ENCODE measurements at regions of chr16 and their contacts with region 1.

Region 1: DNA sequence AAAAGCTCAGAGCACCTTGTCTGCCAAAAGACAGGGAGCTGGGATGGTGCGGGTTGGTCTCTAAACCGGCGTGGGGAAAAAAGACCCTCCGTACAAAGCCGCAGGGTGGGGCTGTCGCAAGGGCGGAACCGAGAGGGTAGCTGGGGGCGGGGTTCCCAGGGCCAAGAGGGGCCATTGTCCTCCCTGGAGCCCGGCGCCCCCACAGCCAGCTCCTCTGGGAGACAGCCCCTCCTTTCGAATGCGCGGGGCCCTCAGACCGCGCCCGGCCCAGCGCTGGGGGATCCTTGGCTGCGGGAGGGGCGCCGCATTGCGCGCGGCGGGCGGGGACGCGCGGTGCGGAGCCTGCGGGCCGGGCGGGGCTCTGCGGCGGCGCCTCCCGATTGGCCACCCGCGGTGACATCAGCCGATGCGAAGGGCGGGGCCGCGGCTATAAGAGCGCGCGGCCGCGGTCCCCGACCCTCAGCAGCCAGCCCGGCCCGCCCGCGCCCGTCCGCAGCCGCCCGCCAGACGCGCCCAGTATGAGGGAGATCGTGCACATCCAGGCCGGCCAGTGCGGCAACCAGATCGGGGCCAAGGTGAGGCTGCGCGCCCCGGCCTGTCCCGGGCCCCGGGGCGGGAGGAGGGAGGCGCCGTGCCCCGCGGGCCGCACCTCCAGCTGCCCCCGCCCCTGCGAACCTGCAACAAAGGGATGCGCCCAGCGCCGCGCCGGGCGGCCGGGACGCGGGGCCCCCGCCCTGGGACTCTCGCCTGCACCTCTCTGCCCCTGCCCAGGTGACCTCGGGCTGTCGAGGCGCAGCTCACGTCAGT is at the start of gene TUBB3:
- DNase-seq: peak; percentile 90 to 98 (median 92)
- ATAC-seq: peak; percentile 69
- H3K4me3 ChIP-seq: peak within 1 kb of the TSS; percentile 69
- H3K27ac ChIP-seq: peak within 1 kb of the TSS; percentile 92
- H3K4me1 ChIP-seq: peaks cover 30 to 86% of the 10 kb centered on the region in 2 experiments
- H3K27me3 ChIP-seq: no peaks in the 10 kb centered on the region
- CTCF ChIP-seq: peak in 2 of 3 experiments; percentile 10 to 11; a peak in 2 of 6 replicates
- EP300 ChIP-seq: no peak
- POLR2A ChIP-seq: peak; percentile 60; the same call in 1 of the 2 replicates
- RAD21 ChIP-seq: no peak
- polyA plus RNA-seq, gene TUBB3: 0.18 to 0.53 TPM

Region 2: DNA sequence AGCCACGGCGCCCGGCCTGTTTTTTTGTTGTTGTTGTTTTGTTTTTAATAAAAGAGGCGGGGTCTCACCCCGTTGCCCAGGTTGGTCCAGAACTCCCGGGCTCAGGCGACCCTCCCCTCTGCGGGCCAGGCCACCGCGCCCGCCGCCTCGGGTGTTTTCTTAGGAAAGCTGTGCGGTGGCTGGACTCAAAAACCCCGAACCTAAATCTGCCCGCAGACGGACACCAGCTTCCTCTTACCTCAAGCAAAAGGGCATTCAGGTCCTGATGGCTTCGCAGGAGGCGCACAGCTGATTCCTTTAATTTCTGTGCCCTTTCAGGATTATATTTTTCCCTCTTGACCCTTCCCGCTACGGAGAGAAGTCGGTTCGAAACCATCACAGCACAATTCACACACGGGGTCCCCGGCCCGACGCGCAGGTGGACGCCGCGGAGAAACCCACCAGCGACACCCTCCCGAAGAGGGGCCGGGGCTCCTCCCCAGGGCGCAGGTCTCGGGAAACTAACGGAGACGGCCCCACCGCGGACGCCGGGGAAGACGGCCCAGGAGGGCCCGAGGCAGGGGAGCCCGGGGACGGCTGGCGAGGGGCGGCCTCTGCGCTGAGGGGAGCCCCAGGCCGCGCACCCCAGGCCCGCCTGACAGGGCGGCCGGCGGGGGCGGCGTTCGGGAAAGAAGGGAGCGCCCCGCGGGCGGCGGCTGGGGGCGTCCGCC is 107.3 kb before region 1 on chr16:
- CTCF ChIA-PET with region 1: no interaction called
- POLR2A ChIA-PET with region 1: interaction called, 4 read pairs
- in situ Hi-C with region 1: no loop called
- intact Hi-C with region 1: loop called (anchors 5 kb)
- DNase-seq: peak in 2 of 4 experiments; percentile 36 to 47
- ATAC-seq: peak; percentile 3
- H3K4me3 ChIP-seq: peak overlapping the region; percentile 75
- H3K27ac ChIP-seq: peak overlapping the region; percentile 85
- H3K4me1 ChIP-seq: peaks cover 11 to 41% of the 10 kb centered on the region in 2 experiments; a peak in 4 of 5 replicates
- H3K27me3 ChIP-seq: no peaks in the 10 kb centered on the region
- CTCF ChIP-seq: no peak
- EP300 ChIP-seq: no peak
- POLR2A ChIP-seq: no peak
- RAD21 ChIP-seq: no peak

Region 3: GRCh38 chr16:89909777-89910716 is 13.0 kb before region 1 on chr16:
- CTCF ChIA-PET with region 1: no interaction called
- POLR2A ChIA-PET with region 1: interaction called, 19 read pairs
- in situ Hi-C with region 1: no loop called
- intact Hi-C with region 1: no loop called
- DNase-seq: peak; percentile 71 to 82 (median 80)
- ATAC-seq: peak; percentile 98
- H3K4me3 ChIP-seq: no peak overlapping the region
- H3K27ac ChIP-seq: no peak overlapping the region
- H3K4me1 ChIP-seq: peaks cover 0 to 37% of the 10 kb centered on the region in 2 experiments; a peak in 2 of 5 replicates
- H3K27me3 ChIP-seq: no peaks in the 10 kb centered on the region
- CTCF ChIP-seq: peak; percentile 80 to 96 (median 84)
- EP300 ChIP-seq: no peak
- POLR2A ChIP-seq: no peak
- RAD21 ChIP-seq: peak in 1 of 2 experiments; percentile 64; a peak in 3 of 4 replicates

Region 4: GRCh38 chr16:89972244-89973234 is 49.5 kb after region 1 on chr16:
- CTCF ChIA-PET with region 1: no interaction called
- POLR2A ChIA-PET with region 1: interaction called, 3 read pairs
- in situ Hi-C with region 1: no loop called
- intact Hi-C with region 1: loop called (anchors 10 kb)
- DNase-seq: peak; percentile 96 to 100 (median 100)
- ATAC-seq: peak; percentile 91
- H3K4me3 ChIP-seq: peak overlapping the region; percentile 93
- H3K27ac ChIP-seq: peak overlapping the region; percentile 99
- H3K4me1 ChIP-seq: peaks cover 23 to 30% of the 10 kb centered on the region in 2 experiments; a peak in 4 of 5 replicates
- H3K27me3 ChIP-seq: no peaks in the 10 kb centered on the region
- CTCF ChIP-seq: peak in 1 of 3 experiments; percentile 26; a peak in 1 of 6 replicates
- EP300 ChIP-seq: no peak
- POLR2A ChIP-seq: peak; percentile 97
- RAD21 ChIP-seq: no peak

Region 5: GRCh38 chr16:90077226-90077756 is 154.2 kb after region 1 on chr16 and contains the start of gene PRDM7:
- CTCF ChIA-PET with region 1: no interaction called
- POLR2A ChIA-PET with region 1: no interaction called
- in situ Hi-C with region 1: no loop called
- intact Hi-C with region 1: loop called (anchors 5 kb)
- DNase-seq: peak; percentile 98 to 100 (median 100)
- ATAC-seq: peak; percentile 98
- H3K4me3 ChIP-seq: peak within 1 kb of the TSS; percentile 38
- H3K27ac ChIP-seq: peak within 1 kb of the TSS; percentile 77
- H3K4me1 ChIP-seq: peaks cover 11 to 24% of the 10 kb centered on the region in 2 experiments
- H3K27me3 ChIP-seq: no peaks in the 10 kb centered on the region
- CTCF ChIP-seq: no peak
- EP300 ChIP-seq: no peak
- POLR2A ChIP-seq: peak; percentile 51; the same call in 1 of the 2 replicates
- RAD21 ChIP-seq: no peak
- polyA plus RNA-seq, gene PRDM7: not detected